ENCODE measurements at regions of chr1 and their contacts with region 1.

Region 1: GRCh38 chr1:153946622-153947241 is at the start of gene DENND4B:
- DNase-seq: peak; percentile 33 to 83 (median 60)
- ATAC-seq: peak; percentile 63 to 68 (median 66)
- H3K4me3 ChIP-seq: peak within 1 kb of the TSS; percentile 70 to 83
- H3K4me3 Mint-ChIP-seq: peak within 1 kb of the TSS; percentile 91 to 94 (median 92)
- H3K27ac ChIP-seq: peak within 1 kb of the TSS; percentile 84
- H3K27ac Mint-ChIP-seq: peak within 1 kb of the TSS; percentile 90 to 96
- H3K4me1 ChIP-seq: peaks cover 9 to 44% of the 10 kb centered on the region in 2 experiments
- H3K4me1 Mint-ChIP-seq: peaks cover 30 to 40% (median 34%) of the 10 kb centered on the region in 3 donors
- H3K27me3 ChIP-seq: no peaks in the 10 kb centered on the region
- H3K27me3 Mint-ChIP-seq: no peaks in the 10 kb centered on the region
- total RNA-seq, gene DENND4B: 161 to 220 (median 196) TPM

Region 2: DNA sequence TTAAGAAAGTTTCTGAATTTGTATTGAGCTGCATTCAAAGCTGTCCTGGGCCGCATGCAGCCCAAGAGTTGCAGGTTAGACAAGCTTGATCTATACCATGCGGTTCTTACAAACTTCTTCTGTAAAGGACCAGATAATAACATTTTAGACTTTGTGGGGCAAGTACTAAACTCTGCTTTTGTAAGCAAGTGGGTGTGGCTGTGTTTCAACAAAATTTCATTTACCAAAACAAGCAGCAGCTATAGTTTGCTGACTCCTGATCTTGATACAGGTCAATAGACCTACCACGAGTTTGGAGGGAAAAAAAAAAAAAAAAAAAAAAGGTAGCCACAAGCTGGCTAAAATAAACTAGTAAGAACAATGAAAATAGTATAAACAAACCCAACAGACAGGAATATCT is 71.3 kb before region 1 on chr1:
- CTCF ChIA-PET with region 1: no interaction called
- POLR2A ChIA-PET with region 1: interaction called in 1 of 2 experiments, 13 read pairs
- DNase-seq: no peak
- ATAC-seq: no peak
- H3K4me3 ChIP-seq: no peak overlapping the region
- H3K4me3 Mint-ChIP-seq: no peak overlapping the region
- H3K27ac ChIP-seq: no peak overlapping the region
- H3K27ac Mint-ChIP-seq: peak overlapping the region in 1 of 2 donors; percentile 40
- H3K4me1 ChIP-seq: peaks cover 2 to 24% of the 10 kb centered on the region in 2 experiments
- H3K4me1 Mint-ChIP-seq: peaks cover 46 to 55% (median 50%) of the 10 kb centered on the region in 3 donors
- H3K27me3 ChIP-seq: no peaks in the 10 kb centered on the region
- H3K27me3 Mint-ChIP-seq: no peaks in the 10 kb centered on the region

Region 3: GRCh38 chr1:153903841-153904455 is 42.8 kb before region 1 on chr1:
- CTCF ChIA-PET with region 1: no interaction called
- POLR2A ChIA-PET with region 1: interaction called, 5 to 10 read pairs
- DNase-seq: no peak
- ATAC-seq: no peak
- H3K4me3 ChIP-seq: no peak overlapping the region
- H3K4me3 Mint-ChIP-seq: no peak overlapping the region
- H3K27ac ChIP-seq: no peak overlapping the region
- H3K27ac Mint-ChIP-seq: no peak overlapping the region
- H3K4me1 ChIP-seq: peaks cover 0 to 21% of the 10 kb centered on the region in 2 experiments
- H3K4me1 Mint-ChIP-seq: peaks cover 27 to 56% (median 50%) of the 10 kb centered on the region in 3 donors
- H3K27me3 ChIP-seq: no peaks in the 10 kb centered on the region
- H3K27me3 Mint-ChIP-seq: no peaks in the 10 kb centered on the region

Region 4: GRCh38 chr1:153967082-153968000 is 20.6 kb after region 1 on chr1 and contains the start of gene CREB3L4:
- CTCF ChIA-PET with region 1: interaction called in 1 of 2 experiments, 12 read pairs
- POLR2A ChIA-PET with region 1: interaction called in 1 of 2 experiments, 3 read pairs
- DNase-seq: peak; percentile 69 to 94 (median 84)
- ATAC-seq: peak; percentile 85 to 87 (median 86)
- H3K4me3 ChIP-seq: peak within 1 kb of the TSS; percentile 78 to 91
- H3K4me3 Mint-ChIP-seq: peak within 1 kb of the TSS; percentile 86 to 95 (median 92)
- H3K27ac ChIP-seq: peak within 1 kb of the TSS; percentile 82
- H3K27ac Mint-ChIP-seq: peak within 1 kb of the TSS; percentile 97 to 98
- H3K4me1 ChIP-seq: peaks cover 20 to 53% of the 10 kb centered on the region in 2 experiments
- H3K4me1 Mint-ChIP-seq: peaks cover 48 to 67% (median 53%) of the 10 kb centered on the region in 3 donors
- H3K27me3 ChIP-seq: no peaks in the 10 kb centered on the region
- H3K27me3 Mint-ChIP-seq: no peaks in the 10 kb centered on the region
- total RNA-seq, gene CREB3L4: 3.3 to 9.0 (median 6.3) TPM

Measured in T-cell (primary cell).